Activated naive CD4-positive, alpha-beta T cell treated with anti-CD3 and anti-CD28 coated beads for 36 hours (primary cell): ENCODE measurements at regions of chr2 and their contacts with region 1.

Region 1: GRCh38 chr2:121530212-121530705 is 421 bp upstream of the RNU4ATAC start:
- DNase-seq: peak; percentile 86
- H3K4me3 Mint-ChIP-seq: peak overlapping the region; percentile 97
- H3K27ac Mint-ChIP-seq: peak overlapping the region; percentile 99
- H3K4me1 Mint-ChIP-seq: peaks cover 57% of the 10 kb centered on the region
- H3K27me3 Mint-ChIP-seq: no peaks in the 10 kb centered on the region

Region 2: GRCh38 chr2:121076885-121077549 is 453.2 kb before region 1 on chr2:
- CTCF ChIA-PET with region 1: no interaction called
- intact Hi-C with region 1: loop called (anchors 2 kb)
- DNase-seq: peak; percentile 79
- H3K4me3 Mint-ChIP-seq: no peak overlapping the region
- H3K27ac Mint-ChIP-seq: no peak overlapping the region
- H3K4me1 Mint-ChIP-seq: no peaks in the 10 kb centered on the region
- H3K27me3 Mint-ChIP-seq: peaks cover 17% of the 10 kb centered on the region

Region 3: DNA sequence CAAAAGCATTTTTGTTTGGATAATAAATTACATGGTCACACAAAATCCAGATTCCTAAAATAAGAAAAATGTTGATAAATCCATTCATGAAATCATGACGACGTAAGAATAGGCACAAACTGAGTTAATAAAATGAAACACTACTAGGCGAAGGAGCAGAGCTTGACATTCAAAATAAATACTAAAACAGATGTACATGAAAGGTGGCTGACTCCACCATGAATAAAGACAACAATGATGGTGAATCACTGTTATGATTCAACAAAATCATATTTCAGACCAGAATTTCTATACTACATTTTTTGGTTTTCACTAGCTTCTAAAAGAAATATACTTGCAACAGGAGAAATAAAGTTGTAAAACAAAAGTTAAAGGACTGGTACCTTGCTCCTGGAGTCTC is 121.6 kb before region 1 on chr2:
- CTCF ChIA-PET with region 1: no interaction called
- intact Hi-C with region 1: no loop called
- DNase-seq: no peak
- H3K4me3 Mint-ChIP-seq: no peak overlapping the region
- H3K27ac Mint-ChIP-seq: no peak overlapping the region
- H3K4me1 Mint-ChIP-seq: no peaks in the 10 kb centered on the region
- H3K27me3 Mint-ChIP-seq: no peaks in the 10 kb centered on the region

Region 4: GRCh38 chr2:121489284-121489683 is 41.0 kb before region 1 on chr2:
- CTCF ChIA-PET with region 1: no interaction called
- intact Hi-C with region 1: loop called (anchors 2 kb)
- DNase-seq: no peak
- H3K4me3 Mint-ChIP-seq: no peak overlapping the region
- H3K27ac Mint-ChIP-seq: no peak overlapping the region
- H3K4me1 Mint-ChIP-seq: peaks cover 32% of the 10 kb centered on the region
- H3K27me3 Mint-ChIP-seq: no peaks in the 10 kb centered on the region

Region 5: GRCh38 chr2:121579309-121579708 is 49.0 kb after region 1 on chr2:
- CTCF ChIA-PET with region 1: no interaction called
- intact Hi-C with region 1: no loop called
- DNase-seq: no peak
- H3K4me3 Mint-ChIP-seq: no peak overlapping the region
- H3K27ac Mint-ChIP-seq: no peak overlapping the region
- H3K4me1 Mint-ChIP-seq: peaks cover 25% of the 10 kb centered on the region
- H3K27me3 Mint-ChIP-seq: no peaks in the 10 kb centered on the region

Region 6: DNA sequence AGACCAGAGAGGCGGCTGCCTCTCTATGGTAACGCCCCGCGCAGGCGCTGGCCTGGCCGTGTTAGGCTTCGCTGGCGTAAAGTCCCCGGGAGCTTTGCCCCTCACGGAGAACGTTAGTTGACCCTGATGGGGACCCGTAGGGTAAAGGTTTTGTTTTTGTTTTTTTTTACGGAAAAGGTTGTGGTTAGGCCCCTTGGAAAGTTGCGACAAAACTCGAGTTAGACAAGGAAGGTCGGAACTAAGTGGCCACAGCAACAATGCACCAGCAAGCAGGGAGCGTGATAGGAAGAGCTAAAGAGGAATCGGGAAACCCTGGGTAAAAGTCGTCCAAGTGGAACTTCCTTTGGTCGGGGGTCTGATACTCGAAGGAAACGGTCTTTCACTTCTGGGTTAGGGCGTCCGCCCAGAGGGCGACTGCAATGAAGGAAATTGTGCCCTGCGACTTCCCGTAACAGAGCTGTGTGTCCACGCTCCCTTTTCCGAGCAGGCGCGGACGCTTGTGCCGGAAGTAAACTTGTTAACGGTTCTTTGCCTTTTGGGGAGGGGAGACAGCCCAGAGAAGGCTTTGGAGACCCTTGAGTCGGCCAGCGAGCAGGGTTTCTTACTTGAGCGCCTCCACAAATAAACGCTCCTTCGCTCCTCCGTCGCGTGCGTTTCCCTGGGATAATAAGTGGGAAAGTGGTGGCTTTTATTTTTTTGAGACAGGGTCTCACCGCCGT is 119.5 kb after region 1 on chr2:
- CTCF ChIA-PET with region 1: interaction called, 4 read pairs
- intact Hi-C with region 1: loop called (anchors 1 kb)
- DNase-seq: peak; percentile 97
- H3K4me3 Mint-ChIP-seq: peak overlapping the region; percentile 98
- H3K27ac Mint-ChIP-seq: peak overlapping the region; percentile 99
- H3K4me1 Mint-ChIP-seq: peaks cover 63% of the 10 kb centered on the region
- H3K27me3 Mint-ChIP-seq: no peaks in the 10 kb centered on the region

Region 7: GRCh38 chr2:121722479-121722878 is 192.2 kb after region 1 on chr2:
- CTCF ChIA-PET with region 1: interaction called, 9 read pairs
- intact Hi-C with region 1: loop called (anchors 1 kb)
- DNase-seq: peak; percentile 59
- H3K4me3 Mint-ChIP-seq: no peak overlapping the region
- H3K27ac Mint-ChIP-seq: peak overlapping the region; percentile 91
- H3K4me1 Mint-ChIP-seq: peaks cover 41% of the 10 kb centered on the region
- H3K27me3 Mint-ChIP-seq: no peaks in the 10 kb centered on the region

Region 8: DNA sequence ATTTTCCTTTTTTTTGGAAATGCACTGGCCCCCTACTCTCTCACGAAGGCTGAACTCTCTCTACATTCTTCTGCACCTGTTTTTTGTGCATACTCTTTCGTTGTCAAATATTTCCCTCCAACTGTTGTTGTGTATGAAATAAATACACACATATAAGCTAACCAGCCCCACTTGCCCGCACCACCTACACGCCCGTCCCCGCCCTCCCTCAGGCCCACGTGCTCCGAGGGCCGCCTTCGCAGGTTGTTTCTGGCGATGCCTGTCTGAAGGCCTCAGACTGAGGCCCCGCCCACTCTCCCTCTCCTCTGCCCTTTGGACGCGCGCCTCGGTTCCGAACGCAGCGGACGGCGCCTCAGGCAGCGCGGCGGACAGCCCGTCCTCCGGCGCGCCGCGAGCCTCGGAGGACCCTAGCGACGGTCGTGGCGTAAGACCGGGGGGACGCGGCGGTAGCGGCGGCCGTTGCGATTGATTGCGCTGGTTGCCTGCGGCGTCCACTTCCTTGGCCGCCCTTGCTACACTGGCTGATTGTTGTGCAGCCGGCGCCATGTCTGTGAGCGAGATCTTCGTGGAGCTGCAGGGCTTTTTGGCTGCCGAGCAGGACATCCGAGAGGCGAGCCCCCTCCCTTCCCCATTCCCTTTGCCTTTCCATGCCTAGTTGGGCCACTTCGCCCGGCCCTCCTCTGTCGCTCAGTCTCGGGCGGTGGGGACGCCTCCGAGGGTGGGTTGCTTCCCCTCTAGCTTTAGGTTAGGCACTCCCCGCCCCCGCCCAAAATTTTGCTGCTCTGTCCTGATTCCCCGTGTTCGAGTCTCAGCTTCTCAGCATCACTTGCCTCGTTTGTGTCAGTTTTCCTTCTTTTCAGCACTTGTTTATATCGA is 225.2 kb after region 1 on chr2 and contains the start of gene TSN:
- CTCF ChIA-PET with region 1: no interaction called
- intact Hi-C with region 1: loop called (anchors 1 kb)
- DNase-seq: peak; percentile 98
- H3K4me3 Mint-ChIP-seq: peak within 1 kb of the TSS; percentile 91
- H3K27ac Mint-ChIP-seq: peak within 1 kb of the TSS; percentile 80
- H3K4me1 Mint-ChIP-seq: peaks cover 32% of the 10 kb centered on the region
- H3K27me3 Mint-ChIP-seq: no peaks in the 10 kb centered on the region
- total RNA-seq, gene TSN: 49.8 to 52.6 TPM